Heart left ventricle (tissue), 16 donors: ENCODE measurements at regions of chr1 and their contacts with region 1.

Region 1: DNA sequence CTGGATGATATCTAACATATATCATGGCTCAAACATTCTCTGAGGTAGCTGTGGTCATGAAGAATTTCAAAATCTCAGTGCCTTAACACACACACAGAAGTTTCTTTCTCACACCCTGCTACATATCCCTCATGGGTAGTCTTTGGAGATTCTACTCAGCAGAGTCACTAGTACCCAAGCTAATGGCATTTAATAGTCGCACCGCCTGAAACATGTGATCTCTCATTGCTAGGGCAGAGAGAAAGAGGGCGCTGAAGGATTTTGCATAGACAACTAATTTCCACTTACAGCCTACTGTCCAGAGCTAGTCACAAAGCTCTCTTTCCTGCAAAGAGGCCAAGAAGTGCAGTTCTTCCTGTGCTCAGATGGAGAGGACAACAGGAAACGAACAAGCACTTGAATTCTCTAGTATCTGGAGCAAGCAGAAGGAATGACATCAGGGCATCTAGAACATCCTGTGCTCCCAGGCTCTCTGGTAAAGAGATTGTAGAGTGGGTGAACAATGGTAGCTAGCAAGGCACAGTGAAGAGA is 183.4 kb upstream of the PTBP2 start:
- DNase-seq: peak in 3 of 5 donors; percentile 19 to 28 (median 24)
- ATAC-seq: peak; percentile 91 to 97 (median 95)
- H3K4me3 ChIP-seq: peak overlapping the region in 1 of 12 donors; percentile 2
- H3K27ac ChIP-seq: peak overlapping the region; percentile 36 to 92 (median 72)
- H3K4me1 ChIP-seq: peaks cover 0 to 26% (median 13%) of the 10 kb centered on the region in 12 donors
- H3K27me3 ChIP-seq: no peaks in the 10 kb centered on the region
- CTCF ChIP-seq: peak in 10 of 12 donors; percentile 7 to 65 (median 42)
- POLR2A ChIP-seq: no peak

Region 2: DNA sequence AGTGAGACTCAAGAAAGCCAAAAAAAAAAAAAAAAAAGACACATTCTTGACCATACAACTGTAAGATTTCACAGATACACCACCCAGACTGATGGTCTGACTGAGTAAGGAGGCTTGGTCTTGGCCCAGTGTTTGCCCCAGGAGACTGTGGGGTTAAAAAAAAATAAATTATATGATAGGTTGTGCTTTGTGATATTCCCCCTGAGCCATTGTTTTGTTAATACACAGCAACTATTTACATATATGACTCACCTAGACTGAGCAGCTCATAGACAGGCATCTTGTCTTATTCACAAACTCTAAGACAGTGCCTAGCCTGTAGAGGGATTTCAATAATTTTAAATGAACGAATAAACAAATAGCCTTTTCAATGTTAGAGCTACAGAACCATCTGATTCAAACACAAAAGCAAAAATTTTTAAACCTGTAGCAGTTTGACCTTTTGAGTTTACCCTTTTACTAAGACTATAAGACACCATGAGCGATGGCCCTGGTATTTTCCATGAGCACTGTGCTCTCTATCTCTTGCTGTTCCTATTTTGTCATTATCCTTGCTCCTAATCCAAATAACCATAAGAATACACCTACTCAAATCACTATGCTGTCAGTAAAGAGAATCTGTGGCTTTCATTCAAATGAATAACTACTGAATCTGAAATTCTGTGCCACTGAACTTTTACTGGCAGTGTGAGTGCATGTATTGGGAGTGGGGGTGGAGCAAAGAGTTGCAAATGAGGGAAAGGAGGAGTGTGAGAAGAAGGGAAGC is 16.0 kb before region 1 on chr1:
- intact Hi-C with region 1: no loop called
- DNase-seq: no peak
- ATAC-seq: no peak
- H3K4me3 ChIP-seq: no peak overlapping the region
- H3K27ac ChIP-seq: peak overlapping the region in 1 of 12 donors; percentile 11
- H3K4me1 ChIP-seq: peaks cover 0 to 5% (median 0%) of the 10 kb centered on the region in 12 donors
- H3K27me3 ChIP-seq: no peaks in the 10 kb centered on the region
- CTCF ChIP-seq: no peak
- POLR2A ChIP-seq: no peak

Region 3: DNA sequence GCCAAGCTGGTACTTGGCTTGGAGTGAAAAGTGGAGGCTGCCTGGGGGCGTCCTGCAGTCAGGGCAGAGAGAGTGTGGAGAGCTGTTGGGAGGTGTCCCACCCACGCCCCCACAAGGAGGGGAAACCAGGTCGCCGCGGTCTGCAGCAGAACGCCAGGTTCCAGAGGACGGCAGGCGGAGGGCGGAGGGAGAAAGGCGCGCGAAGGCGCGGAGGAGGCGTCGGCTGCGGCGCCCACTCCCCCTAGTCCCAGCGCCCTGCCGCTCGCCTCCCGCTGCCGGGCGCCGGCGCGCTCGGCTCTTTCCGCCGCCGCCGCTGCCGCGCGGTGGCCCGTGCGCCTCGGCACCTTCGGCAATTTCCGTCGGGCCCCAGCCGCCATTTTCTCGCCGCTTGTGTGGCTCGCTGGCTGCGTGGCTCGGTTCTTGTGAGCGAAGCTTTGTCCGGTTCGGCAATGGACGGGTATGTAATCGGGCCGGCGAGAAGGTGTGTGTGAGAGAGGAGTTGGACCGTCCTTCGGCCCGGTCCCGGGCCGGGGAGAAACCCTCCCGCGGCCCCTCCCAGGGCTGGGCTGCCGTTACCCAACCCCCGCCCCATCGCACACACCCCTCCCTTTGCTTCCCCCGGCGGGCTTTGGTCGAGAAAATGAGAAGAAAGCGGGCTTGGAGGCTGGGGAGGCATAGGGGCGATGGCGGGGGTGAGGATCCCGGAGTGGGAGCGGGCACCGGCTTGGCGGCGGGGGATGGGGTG is 183.4 kb after region 1 on chr1 and contains the start of gene PTBP2:
- intact Hi-C with region 1: loop called in 2 of 10 experiments (anchors 5 to 10 kb)
- DNase-seq: peak; percentile 82 to 91 (median 88)
- ATAC-seq: peak; percentile 86 to 97 (median 94)
- H3K4me3 ChIP-seq: peak within 1 kb of the TSS; percentile 78 to 98 (median 92)
- H3K27ac ChIP-seq: peak within 1 kb of the TSS; percentile 86 to 98 (median 95)
- H3K4me1 ChIP-seq: peaks cover 0 to 30% (median 17%) of the 10 kb centered on the region in 12 donors
- H3K27me3 ChIP-seq: no peaks in the 10 kb centered on the region
- CTCF ChIP-seq: no peak
- POLR2A ChIP-seq: peak in 1 of 2 donors; percentile 23
- total RNA-seq, gene PTBP2: 9.7 to 17.6 (median 13.4) TPM

Region 4: DNA sequence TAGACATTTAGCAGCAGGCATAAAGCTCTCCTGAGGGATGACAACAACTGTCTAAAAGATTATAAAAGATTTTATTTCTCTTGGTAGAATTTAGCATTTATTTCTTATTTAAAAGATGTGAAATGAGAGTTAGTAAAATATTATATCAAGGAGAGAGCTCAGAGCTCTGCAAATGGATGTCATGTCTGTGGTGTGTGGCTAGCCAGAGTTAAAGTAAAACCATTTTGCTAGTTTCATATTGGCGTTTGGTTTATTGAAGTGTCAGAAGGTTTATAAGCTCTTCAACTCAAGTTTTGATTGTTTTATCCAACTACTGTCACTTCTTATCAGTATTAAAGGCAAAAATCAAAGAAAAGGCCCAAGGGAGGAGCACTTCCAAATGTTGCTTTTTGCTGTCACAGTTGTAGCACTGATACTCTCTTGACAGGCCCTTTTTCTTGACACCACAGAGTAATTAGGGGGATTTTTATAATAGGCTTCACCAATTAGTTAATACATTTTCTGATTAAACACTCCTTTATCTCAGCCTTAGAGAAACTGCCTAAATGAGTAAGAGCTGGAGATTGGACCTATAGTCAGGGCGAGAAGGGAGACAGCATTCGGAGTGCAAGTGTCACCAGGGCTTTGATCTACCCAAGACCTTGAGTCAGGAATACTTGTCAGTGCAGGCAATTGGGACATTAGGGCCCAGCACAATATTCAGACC is 417.3 kb after region 1 on chr1:
- intact Hi-C with region 1: loop called in 1 of 10 experiments (anchors 10 kb)
- DNase-seq: no peak
- ATAC-seq: no peak
- H3K4me3 ChIP-seq: no peak overlapping the region
- H3K27ac ChIP-seq: no peak overlapping the region
- H3K4me1 ChIP-seq: no peaks in the 10 kb centered on the region
- H3K27me3 ChIP-seq: no peaks in the 10 kb centered on the region
- CTCF ChIP-seq: no peak
- POLR2A ChIP-seq: no peak